ENCODE measurements at regions of chrX and their contacts with region 1.

Region 1: DNA sequence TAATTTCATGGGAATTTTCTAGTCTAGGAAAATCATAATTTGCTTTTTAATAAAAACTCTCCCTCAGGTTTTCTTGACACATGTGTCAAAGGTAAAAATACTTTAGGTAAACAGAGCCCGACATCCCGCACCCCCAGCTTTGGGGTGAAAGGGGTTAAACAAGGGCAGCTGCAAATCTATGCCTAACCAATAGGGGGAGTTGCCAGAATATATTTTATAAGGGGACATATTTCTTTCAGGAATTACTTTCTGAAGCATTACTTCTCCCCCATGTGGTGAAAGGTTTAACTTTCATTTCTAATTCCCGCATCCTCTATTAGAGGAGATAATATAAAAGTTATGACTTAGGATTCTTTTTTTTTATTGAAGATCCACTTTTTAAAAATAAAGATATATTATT is 53.9 kb upstream of the HEPH start:
- DNase-seq: peak; percentile 10
- ATAC-seq: no peak
- H3K4me3 Mint-ChIP-seq: no peak overlapping the region
- H3K27ac Mint-ChIP-seq: no peak overlapping the region
- H3K4me1 Mint-ChIP-seq: no peaks in the 10 kb centered on the region
- H3K27me3 Mint-ChIP-seq: no peaks in the 10 kb centered on the region
- CTCF ChIP-seq: peak; percentile 71

Region 2: DNA sequence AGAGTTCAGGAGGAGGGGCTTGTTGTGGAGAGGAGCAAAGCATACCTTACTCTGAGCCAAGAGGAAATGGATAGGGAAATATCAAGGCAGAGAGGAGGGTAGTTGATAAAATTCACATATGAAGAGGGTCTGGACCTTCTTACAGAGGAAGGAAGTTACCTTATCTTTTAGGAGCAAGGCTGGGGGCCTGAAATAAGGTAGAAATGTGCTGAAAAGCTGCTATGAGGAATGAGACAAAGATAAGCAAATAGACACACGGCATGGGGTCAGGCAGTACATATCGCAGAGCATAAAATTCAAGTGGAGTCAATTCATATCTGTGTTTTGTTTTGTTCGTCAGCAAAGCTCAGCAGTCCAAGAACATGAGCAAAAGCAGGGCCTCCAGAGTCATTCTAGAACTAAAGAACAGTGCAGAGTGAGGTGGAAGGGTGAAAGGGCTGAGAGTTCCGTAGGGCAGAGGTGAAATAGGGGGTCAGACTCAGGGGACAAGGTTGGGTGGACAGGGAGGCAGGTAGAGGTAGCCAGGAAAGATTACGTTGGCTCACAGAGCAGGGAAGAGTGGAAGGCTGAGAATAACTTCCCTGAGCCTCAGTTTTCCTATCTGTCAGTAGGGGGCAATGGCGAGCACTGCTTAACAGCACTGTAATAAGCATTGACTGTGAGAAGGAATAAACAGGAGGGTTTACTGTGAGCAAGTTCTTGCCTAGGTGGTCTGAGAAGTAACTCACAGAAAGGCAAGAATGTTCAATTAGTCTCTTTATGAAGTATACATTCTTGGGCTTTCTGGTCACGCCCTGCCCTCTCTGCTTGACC is 79.4 kb before region 1 on chrX:
- CTCF ChIA-PET with region 1: interaction called, 13 read pairs
- POLR2A ChIA-PET with region 1: no interaction called
- intact Hi-C with region 1: loop called (anchors 5 kb)
- DNase-seq: peak; percentile 53
- ATAC-seq: peak; percentile 89
- H3K4me3 Mint-ChIP-seq: no peak overlapping the region
- H3K27ac Mint-ChIP-seq: no peak overlapping the region
- H3K4me1 Mint-ChIP-seq: peaks cover 6% of the 10 kb centered on the region
- H3K27me3 Mint-ChIP-seq: no peaks in the 10 kb centered on the region
- CTCF ChIP-seq: peak; percentile 62

Region 3: DNA sequence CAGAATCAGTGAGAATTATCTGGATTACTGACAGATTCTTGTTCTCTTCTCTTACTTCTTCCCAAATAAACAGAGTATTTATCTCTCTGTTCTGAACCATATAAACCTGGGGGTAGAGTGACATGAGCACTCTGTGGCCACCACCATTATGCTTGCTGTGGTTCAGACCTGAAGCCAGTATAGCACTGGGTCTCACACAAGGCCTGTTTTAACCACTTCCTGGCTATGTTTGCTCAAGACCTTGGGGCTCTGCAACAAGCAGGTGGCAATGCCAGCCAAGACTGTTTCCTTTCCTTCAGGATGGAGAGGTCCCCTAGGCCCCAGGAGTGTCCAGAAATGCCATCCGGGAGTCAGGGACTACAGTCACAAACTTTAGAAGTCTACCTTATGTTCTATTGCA is 32.2 kb after region 1 on chrX:
- CTCF ChIA-PET with region 1: no interaction called
- POLR2A ChIA-PET with region 1: no interaction called
- intact Hi-C with region 1: no loop called
- DNase-seq: no peak
- ATAC-seq: no peak
- H3K4me3 Mint-ChIP-seq: no peak overlapping the region
- H3K27ac Mint-ChIP-seq: no peak overlapping the region
- H3K4me1 Mint-ChIP-seq: no peaks in the 10 kb centered on the region
- H3K27me3 Mint-ChIP-seq: no peaks in the 10 kb centered on the region
- CTCF ChIP-seq: no peak

Region 4: DNA sequence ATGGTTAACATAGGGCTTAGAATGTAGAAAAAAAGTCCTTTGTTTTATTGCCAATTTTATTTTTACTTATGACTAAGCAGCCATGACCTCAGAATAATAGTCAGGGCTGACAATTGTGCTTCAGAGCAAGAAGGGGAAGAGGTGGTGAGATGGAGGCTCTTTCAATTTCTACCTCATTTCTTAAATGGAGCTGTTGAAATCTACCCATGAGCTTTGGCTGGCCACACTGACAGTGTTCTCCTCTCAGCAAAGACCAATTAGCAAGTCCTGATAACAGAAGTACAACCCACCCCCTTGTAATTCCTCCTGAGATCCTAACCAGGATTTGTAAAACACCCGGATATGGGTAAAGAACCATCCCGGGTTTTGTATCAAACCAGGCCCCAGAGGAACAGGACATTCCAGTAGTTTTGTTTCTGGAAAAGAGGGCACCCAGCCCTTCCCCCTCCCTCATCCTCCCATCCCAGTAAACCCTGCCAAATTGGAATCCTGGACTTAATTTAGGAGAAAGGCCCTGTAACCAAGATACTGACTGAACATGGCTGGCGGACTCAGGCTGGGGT is 53.8 kb after region 1 on chrX and contains the start of gene HEPH:
- CTCF ChIA-PET with region 1: no interaction called
- POLR2A ChIA-PET with region 1: no interaction called
- intact Hi-C with region 1: no loop called
- DNase-seq: no peak
- ATAC-seq: no peak
- H3K4me3 Mint-ChIP-seq: no peak within 1 kb of the TSS
- H3K27ac Mint-ChIP-seq: no peak within 1 kb of the TSS
- H3K4me1 Mint-ChIP-seq: no peaks in the 10 kb centered on the region
- H3K27me3 Mint-ChIP-seq: no peaks in the 10 kb centered on the region
- CTCF ChIP-seq: no peak
- total RNA-seq, gene HEPH: 0.20 TPM in 1 of 2 experiments, not detected in the other

Measured in activated CD8-positive, alpha-beta T cell treated with anti-CD3 and anti-CD28 coated beads for 36 hours (primary cell).